CD4-positive, alpha-beta memory T cell (primary cell): ENCODE measurements at regions of chr3 and their contacts with region 1.

Region 1: DNA sequence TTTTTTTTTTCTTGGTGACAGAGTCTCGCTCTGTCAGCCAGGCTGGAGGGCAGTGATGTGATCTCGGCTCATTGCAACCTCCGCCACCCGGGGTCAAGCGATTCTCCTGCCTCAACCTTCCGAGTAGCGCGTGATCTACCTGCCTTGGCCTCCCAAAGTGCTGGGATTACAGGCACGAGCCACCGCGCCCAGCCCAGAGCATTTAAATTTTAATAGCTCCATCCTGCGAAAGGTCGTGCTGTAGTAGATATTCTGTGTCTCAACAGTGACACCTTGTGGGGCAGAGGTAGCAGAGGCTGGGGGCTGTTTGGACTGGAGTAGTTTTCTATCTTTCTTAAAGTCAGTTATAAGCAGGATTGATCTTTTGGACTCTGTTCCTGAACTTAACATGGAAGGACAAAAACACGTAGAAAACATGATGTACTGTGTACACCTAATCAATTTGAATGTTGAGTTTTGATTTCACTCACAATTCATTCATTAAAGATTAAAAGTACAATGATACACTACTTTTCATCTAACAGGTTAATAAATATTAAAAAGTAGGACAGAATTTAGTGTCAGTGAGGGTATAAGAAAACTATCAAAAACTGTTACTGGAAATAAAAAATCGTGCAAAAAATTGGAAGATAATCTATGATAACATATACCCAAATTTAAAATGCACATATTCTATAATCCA is 11.0 kb upstream of the PDCD6IP start:
- DNase-seq: peak; percentile 52 to 65 (median 59)
- H3K4me3 ChIP-seq: no peak overlapping the region
- H3K4me3 Mint-ChIP-seq: peak overlapping the region in 4 of 8 donors; percentile 23 to 70 (median 30)
- H3K27ac ChIP-seq: no peak overlapping the region
- H3K27ac Mint-ChIP-seq: peak overlapping the region in 2 of 7 donors; percentile 21 to 37
- H3K4me1 ChIP-seq: peaks cover 4% of the 10 kb centered on the region
- H3K4me1 Mint-ChIP-seq: peaks cover 0 to 4% (median 2%) of the 10 kb centered on the region in 4 donors
- H3K27me3 ChIP-seq: no peaks in the 10 kb centered on the region
- H3K27me3 Mint-ChIP-seq: peaks cover 6 to 11% of the 10 kb centered on the region in 2 donors

Region 2: DNA sequence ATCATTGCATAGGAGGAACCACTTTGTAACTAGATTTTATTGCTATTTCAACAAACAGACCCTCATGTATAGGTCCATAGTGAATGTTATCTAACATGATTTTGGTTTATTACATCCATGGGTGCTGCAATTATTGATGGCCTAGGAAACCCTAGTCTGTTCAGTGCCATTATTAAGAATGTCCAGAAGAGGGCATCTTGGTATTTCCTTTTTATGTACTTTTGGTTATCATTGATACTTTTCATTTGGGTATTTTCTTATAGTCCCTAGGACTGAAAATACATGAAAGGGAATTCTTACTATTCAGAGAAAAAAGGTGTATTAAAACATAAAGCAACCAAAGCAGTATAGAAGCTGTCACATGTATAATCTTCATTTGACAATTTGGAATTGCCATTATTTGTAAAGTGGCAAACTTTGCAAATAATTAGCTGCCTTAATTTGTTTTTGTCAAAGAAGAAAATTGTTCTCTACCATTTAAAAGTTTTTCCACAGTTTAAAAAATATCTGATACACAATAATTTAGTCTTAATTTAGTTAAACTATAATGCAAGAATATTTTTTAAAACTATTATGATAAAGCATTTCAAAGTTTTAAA is 1053.7 kb before region 1 on chr3:
- CTCF ChIA-PET with region 1: no interaction called
- POLR2A ChIA-PET with region 1: no interaction called
- intact Hi-C with region 1: loop called (anchors 5 kb)
- DNase-seq: peak in 3 of 5 donors; percentile 16 to 22 (median 21)
- H3K4me3 ChIP-seq: no peak overlapping the region
- H3K4me3 Mint-ChIP-seq: no peak overlapping the region
- H3K27ac ChIP-seq: no peak overlapping the region
- H3K27ac Mint-ChIP-seq: no peak overlapping the region
- H3K4me1 ChIP-seq: no peaks in the 10 kb centered on the region
- H3K4me1 Mint-ChIP-seq: peaks cover 0 to 1% (median 0%) of the 10 kb centered on the region in 4 donors
- H3K27me3 ChIP-seq: no peaks in the 10 kb centered on the region
- H3K27me3 Mint-ChIP-seq: no peaks in the 10 kb centered on the region

Region 3: GRCh38 chr3:33636125-33636850 is 151.2 kb before region 1 on chr3:
- CTCF ChIA-PET with region 1: interaction called, 34 read pairs
- POLR2A ChIA-PET with region 1: no interaction called
- intact Hi-C with region 1: loop called (anchors 1 kb)
- DNase-seq: peak; percentile 9 to 31 (median 22)
- H3K4me3 ChIP-seq: no peak overlapping the region
- H3K4me3 Mint-ChIP-seq: no peak overlapping the region
- H3K27ac ChIP-seq: no peak overlapping the region
- H3K27ac Mint-ChIP-seq: no peak overlapping the region
- H3K4me1 ChIP-seq: no peaks in the 10 kb centered on the region
- H3K4me1 Mint-ChIP-seq: no peaks in the 10 kb centered on the region
- H3K27me3 ChIP-seq: no peaks in the 10 kb centered on the region
- H3K27me3 Mint-ChIP-seq: no peaks in the 10 kb centered on the region

Region 4: GRCh38 chr3:33773637-33774036 is 13.8 kb before region 1 on chr3:
- CTCF ChIA-PET with region 1: interaction called, 70 read pairs
- POLR2A ChIA-PET with region 1: no interaction called
- intact Hi-C with region 1: no loop called
- DNase-seq: no peak
- H3K4me3 ChIP-seq: no peak overlapping the region
- H3K4me3 Mint-ChIP-seq: no peak overlapping the region
- H3K27ac ChIP-seq: no peak overlapping the region
- H3K27ac Mint-ChIP-seq: no peak overlapping the region
- H3K4me1 ChIP-seq: no peaks in the 10 kb centered on the region
- H3K4me1 Mint-ChIP-seq: no peaks in the 10 kb centered on the region
- H3K27me3 ChIP-seq: no peaks in the 10 kb centered on the region
- H3K27me3 Mint-ChIP-seq: peaks cover 0 to 1% of the 10 kb centered on the region in 2 donors

Region 5: DNA sequence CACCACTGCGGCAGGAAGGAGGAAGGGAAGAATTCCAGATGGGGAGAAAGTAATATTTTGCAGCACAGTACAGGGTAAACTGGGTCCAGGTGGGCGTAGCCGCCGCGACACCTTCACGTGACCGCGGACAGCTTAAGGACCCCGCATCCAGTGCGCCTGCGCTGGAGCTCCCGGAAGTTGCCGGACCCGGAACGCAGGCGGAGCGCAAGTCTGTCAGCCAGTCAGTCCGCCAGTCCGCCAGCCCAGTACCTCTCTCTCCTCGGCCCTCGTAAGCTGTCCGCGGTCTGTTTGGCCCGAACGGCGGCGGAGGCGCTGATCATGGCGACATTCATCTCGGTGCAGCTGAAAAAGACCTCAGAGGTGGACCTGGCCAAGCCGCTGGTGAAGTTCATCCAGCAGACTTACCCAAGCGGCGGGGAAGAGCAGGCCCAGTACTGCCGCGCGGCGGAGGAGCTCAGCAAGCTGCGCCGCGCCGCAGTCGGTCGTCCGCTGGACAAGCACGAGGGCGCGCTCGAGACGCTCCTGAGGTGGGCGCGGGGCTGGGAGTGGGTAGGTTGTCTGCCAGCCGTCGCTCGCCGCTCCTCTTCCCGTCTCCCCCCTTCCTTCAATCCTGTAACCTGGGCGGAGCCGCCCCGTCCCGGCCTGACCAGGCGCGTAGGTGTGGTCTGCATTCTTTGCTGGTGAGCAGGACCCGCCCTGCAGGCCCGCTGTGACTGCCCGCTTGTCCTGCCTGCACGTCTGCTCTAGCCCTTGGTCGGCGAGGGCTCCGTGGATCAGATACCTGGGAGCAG is 11.1 kb after region 1 on chr3 and contains the start of gene PDCD6IP:
- CTCF ChIA-PET with region 1: interaction called, 100 read pairs
- POLR2A ChIA-PET with region 1: interaction called, 9 read pairs
- intact Hi-C with region 1: no loop called
- DNase-seq: peak; percentile 87 to 92 (median 89)
- H3K4me3 ChIP-seq: peak within 1 kb of the TSS; percentile 85 to 92
- H3K4me3 Mint-ChIP-seq: peak within 1 kb of the TSS; percentile 97 to 100 (median 99)
- H3K27ac ChIP-seq: peak within 1 kb of the TSS; percentile 82
- H3K27ac Mint-ChIP-seq: peak within 1 kb of the TSS; percentile 86 to 99 (median 98)
- H3K4me1 ChIP-seq: peaks cover 58% of the 10 kb centered on the region
- H3K4me1 Mint-ChIP-seq: peaks cover 33 to 67% (median 54%) of the 10 kb centered on the region in 4 donors
- H3K27me3 ChIP-seq: no peaks in the 10 kb centered on the region
- H3K27me3 Mint-ChIP-seq: no peaks in the 10 kb centered on the region
- total RNA-seq, gene PDCD6IP: 222 to 237 TPM